ENCODE measurements at regions of chr2 and their contacts with region 1.

Region 1: GRCh38 chr2:113080134-113080533 is 12.4 kb downstream of the IL1F10 start:
- DNase-seq: peak; percentile 28
- H3K4me3 Mint-ChIP-seq: no peak overlapping the region
- H3K27ac Mint-ChIP-seq: no peak overlapping the region
- H3K4me1 Mint-ChIP-seq: peaks cover 17% of the 10 kb centered on the region
- H3K27me3 Mint-ChIP-seq: peaks cover 2% of the 10 kb centered on the region

Region 2: DNA sequence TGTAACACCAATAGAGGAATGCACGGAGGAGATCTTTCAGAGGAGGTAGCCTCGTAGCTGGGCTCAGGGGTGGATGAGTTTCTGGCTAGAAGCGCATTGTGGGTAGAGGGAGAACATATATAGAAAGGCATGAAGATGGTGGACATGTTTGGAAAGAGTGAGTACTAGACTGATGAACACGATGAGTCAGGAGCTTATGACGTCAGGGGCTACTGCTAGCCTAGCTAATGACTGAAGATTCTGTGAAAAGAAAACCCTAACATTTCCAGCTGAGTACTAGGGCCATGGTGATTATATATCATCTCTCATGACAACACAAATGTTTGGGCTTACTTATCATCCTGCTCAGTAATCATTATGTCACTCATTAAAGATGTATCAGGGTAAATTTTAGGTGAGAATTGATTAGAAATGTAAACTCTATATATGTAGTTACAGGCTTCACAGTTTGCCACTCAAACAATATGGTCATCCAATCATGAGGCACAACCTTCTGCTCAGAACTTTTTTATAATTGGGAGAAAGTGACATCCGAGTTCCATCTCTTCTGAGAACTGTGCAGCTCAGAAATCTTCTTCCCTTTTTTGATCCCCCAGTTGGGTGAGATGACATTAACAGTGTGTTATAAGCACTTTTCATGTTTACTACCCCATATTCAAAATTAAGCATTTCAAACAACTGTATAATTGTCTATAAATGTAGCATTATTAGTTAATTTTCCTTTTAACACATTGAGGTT is 25.1 kb after region 1 on chr2:
- intact Hi-C with region 1: loop called (anchors 2 kb)
- DNase-seq: no peak
- H3K4me3 Mint-ChIP-seq: peak overlapping the region; percentile 0
- H3K27ac Mint-ChIP-seq: peak overlapping the region; percentile 96
- H3K4me1 Mint-ChIP-seq: peaks cover 65% of the 10 kb centered on the region
- H3K27me3 Mint-ChIP-seq: peaks cover 2% of the 10 kb centered on the region

Region 3: DNA sequence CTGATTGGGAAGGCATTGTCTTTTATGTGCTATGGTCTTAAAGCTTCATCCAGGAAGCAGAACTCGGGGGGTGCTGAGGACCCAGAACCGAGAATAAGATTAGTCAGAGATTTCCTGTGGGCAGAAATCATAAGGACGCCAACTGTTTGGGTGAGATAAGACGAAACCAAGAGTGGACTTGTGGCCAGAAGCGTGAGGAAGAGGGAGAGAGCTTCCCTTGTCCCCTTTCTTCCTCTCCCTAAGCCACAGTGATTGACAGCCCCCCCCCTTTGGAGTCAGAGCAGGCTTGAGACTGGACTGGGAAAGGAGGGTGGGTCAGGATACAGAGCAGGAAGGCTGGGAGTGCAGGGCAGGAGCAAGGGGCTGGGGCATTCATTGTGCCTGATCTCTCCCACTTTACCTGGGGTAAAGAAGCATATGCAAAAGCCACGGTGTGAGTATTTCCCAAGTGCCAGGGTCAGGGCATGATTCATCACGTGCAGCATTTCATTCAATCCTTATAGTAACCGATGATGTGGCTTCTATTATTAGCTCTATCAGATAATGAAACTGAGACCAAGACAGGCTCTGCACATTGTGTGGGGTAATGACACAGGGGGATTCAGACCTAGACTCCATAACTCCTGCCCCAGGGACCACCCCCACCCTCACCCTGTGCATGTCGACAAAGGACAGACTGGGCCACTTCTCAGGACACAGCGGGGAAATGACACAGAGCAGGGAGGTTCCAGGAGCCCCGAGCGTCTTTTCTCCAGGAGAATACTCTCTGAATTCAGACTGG is 44.2 kb after region 1 on chr2:
- intact Hi-C with region 1: loop called (anchors 2 kb)
- DNase-seq: no peak
- H3K4me3 Mint-ChIP-seq: peak overlapping the region; percentile 29
- H3K27ac Mint-ChIP-seq: no peak overlapping the region
- H3K4me1 Mint-ChIP-seq: peaks cover 59% of the 10 kb centered on the region
- H3K27me3 Mint-ChIP-seq: peaks cover 7% of the 10 kb centered on the region

Region 4: DNA sequence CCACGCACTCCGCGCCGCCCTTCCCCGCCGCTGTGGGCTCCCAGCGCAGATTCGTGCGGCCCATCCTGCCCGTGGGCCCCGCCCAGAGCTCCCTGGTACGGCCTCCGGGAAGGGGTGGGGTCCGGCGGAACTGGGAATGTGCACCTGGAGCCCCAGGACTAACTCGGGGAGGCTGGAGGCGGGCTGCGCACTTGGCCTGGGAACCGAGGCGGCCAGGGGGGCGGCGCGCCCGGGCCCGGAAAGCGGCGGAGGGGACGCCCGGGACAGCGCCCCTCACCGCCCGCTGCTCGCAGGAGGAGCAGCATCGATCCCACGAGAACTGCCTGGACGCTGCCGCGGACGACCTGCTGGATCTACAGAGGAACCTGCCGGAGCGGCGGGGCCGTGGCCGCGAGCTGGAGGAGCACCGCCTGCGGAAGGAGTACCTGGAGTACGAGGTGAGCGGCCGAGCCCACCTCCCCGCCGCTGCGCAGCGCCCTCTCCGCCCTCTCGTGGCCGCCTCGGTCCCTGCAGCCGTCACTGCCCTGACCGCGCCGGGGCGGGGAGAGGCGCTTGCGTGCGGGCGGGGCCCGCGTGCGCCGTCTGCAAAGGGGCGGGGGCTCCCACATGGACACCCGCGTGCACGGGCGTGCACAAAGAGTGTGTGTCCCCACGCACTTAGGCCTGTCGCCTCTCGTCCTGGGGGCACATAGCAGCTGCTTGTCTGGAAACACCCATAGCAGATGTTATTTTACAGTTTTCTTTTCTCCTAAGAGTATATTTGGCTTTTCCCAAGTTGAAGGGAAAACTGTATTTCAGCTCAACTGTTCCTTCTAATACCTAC is 118.9 kb after region 1 on chr2:
- intact Hi-C with region 1: loop called (anchors 1 kb)
- DNase-seq: peak; percentile 70
- H3K4me3 Mint-ChIP-seq: no peak overlapping the region
- H3K27ac Mint-ChIP-seq: peak overlapping the region; percentile 40
- H3K4me1 Mint-ChIP-seq: peaks cover 45% of the 10 kb centered on the region
- H3K27me3 Mint-ChIP-seq: no peaks in the 10 kb centered on the region

Region 5: GRCh38 chr2:113370478-113371091 is 290.5 kb after region 1 on chr2:
- intact Hi-C with region 1: loop called (anchors 2 kb)
- DNase-seq: peak; percentile 47
- H3K4me3 Mint-ChIP-seq: no peak overlapping the region
- H3K27ac Mint-ChIP-seq: no peak overlapping the region
- H3K4me1 Mint-ChIP-seq: peaks cover 8% of the 10 kb centered on the region
- H3K27me3 Mint-ChIP-seq: peaks cover 8% of the 10 kb centered on the region

Region 6: GRCh38 chr2:113390124-113390849 is 310.2 kb after region 1 on chr2:
- intact Hi-C with region 1: loop called (anchors 5 kb)
- DNase-seq: peak; percentile 48
- H3K4me3 Mint-ChIP-seq: peak overlapping the region; percentile 53
- H3K27ac Mint-ChIP-seq: peak overlapping the region; percentile 65
- H3K4me1 Mint-ChIP-seq: peaks cover 16% of the 10 kb centered on the region
- H3K27me3 Mint-ChIP-seq: peaks cover 29% of the 10 kb centered on the region

Measured in activated T-helper 1 cell treated with anti-CD3 and anti-CD28 coated beads, Interleukin-12 subunit alpha, Interleukin-12 subunit beta, Interleukin-2, Interleukin-4 antibody, amounts not matched to agents 30 ng/mL and 10 ng/mL and 1 ng/mL, durations not matched to agents 14 hours and 24 hours and 36 hours (primary cell).